ENCODE measurements at regions of chr10 and their contacts with region 1.

Region 1: GRCh38 chr10:89992575-89992974 is 291.2 kb downstream of the KIF20B start:
- DNase-seq: no peak
- H3K4me3 ChIP-seq: no peak overlapping the region
- H3K27ac ChIP-seq: no peak overlapping the region
- H3K4me1 ChIP-seq: no peaks in the 10 kb centered on the region
- H3K27me3 ChIP-seq: no peaks in the 10 kb centered on the region
- CTCF ChIP-seq: no peak

Region 2: GRCh38 chr10:89829887-89830269 is 162.7 kb before region 1 on chr10:
- CTCF ChIA-PET with region 1: no interaction called
- POLR2A ChIA-PET with region 1: interaction called, 10 read pairs
- intact Hi-C with region 1: no loop called
- DNase-seq: no peak
- H3K4me3 ChIP-seq: no peak overlapping the region
- H3K27ac ChIP-seq: no peak overlapping the region
- H3K4me1 ChIP-seq: no peaks in the 10 kb centered on the region
- H3K27me3 ChIP-seq: no peaks in the 10 kb centered on the region
- CTCF ChIP-seq: no peak

Region 3: DNA sequence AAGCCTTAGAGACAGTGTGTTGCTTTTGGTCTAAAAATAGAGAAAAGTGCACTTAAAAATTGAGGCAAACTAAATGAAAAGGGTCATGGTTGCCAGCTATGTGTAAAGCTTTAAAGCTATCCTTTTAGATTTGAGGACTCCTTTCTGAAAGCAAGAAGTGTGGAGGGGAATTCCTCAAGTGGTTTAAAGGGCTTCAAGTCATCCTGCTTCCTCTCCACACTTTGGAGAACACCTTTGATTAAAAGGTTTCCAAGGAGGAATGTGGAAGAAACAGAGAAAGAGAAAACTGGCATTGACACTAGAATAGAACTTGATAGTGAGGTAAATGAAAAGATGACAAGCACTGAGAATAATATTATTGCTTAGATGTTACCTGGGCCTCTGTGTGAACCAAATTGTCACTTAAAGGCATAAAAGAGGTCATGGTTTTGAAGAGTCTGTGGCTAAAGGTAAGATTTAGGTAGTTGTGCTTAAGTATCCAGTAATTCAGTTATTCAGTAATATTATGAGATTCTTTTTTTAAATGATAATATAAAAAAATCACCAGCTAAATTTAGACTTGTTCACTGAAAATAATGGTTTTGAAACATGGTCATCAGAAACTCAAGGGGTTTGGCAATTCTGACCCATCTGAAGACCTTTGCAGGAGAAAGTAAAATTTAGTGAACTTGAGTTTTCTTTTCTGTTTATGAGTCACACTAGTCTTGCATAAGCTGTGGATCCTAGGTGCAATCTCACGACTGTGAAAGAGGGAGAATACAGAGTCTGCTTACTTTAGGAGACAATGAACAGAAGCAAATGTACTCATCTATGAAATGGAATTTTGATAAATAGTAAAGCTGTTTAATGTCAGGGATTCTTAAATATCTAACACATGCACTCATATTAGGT is 174.8 kb after region 1 on chr10:
- CTCF ChIA-PET with region 1: no interaction called
- POLR2A ChIA-PET with region 1: no interaction called
- intact Hi-C with region 1: no loop called
- DNase-seq: no peak
- H3K4me3 ChIP-seq: no peak overlapping the region
- H3K27ac ChIP-seq: no peak overlapping the region
- H3K4me1 ChIP-seq: no peaks in the 10 kb centered on the region
- H3K27me3 ChIP-seq: no peaks in the 10 kb centered on the region
- CTCF ChIP-seq: no peak

Measured in PC-9 (cell line).